PC-3 (cell line): ENCODE measurements at regions of chr13 and their contacts with region 1.

Region 1: DNA sequence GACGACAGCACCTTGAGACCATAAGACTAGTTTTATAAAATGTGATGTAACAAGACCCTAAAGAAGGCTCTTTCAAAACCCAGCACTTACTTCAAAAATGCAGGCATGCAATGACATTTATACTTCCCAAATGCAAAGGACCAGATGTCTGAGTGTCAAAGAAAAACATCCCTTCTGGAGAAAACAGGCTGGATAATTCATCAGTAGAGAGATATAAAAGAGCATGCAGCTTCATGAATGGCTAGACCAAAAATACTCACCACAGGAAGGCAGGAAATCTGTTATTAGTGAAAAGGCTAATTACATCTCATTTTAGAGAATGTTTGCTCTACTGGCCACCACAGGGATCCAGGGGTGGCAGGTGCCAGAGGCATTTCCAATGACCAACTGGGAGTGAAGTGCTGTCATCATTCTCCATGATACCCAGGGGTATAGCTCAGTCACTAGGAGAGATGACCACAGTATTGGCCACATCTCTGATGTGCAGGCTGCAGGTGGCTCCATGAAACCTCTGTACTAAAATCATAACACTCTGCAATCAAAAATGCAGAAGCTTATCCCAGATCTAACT is 106.5 kb downstream of the LHFPL6 start:
- DNase-seq: no peak
- ATAC-seq: no peak
- H3K4me3 ChIP-seq: no peak overlapping the region
- H3K27ac ChIP-seq: no peak overlapping the region
- H3K4me1 ChIP-seq: no peaks in the 10 kb centered on the region
- H3K27me3 ChIP-seq: no peaks in the 10 kb centered on the region
- CTCF ChIP-seq: no peak

Region 2: GRCh38 chr13:40798380-40798779 is 1301.9 kb after region 1 on chr13:
- CTCF ChIA-PET with region 1: interaction called, 10 read pairs
- POLR2A ChIA-PET with region 1: no interaction called
- intact Hi-C with region 1: no loop called
- DNase-seq: peak; percentile 11
- ATAC-seq: peak; percentile 89
- H3K4me3 ChIP-seq: no peak overlapping the region
- H3K27ac ChIP-seq: no peak overlapping the region
- H3K4me1 ChIP-seq: no peaks in the 10 kb centered on the region
- H3K27me3 ChIP-seq: no peaks in the 10 kb centered on the region
- CTCF ChIP-seq: no peak